Endothelial cell of umbilical vein (primary cell): ENCODE measurements at regions of chr14 and their contacts with region 1.

Region 1: DNA sequence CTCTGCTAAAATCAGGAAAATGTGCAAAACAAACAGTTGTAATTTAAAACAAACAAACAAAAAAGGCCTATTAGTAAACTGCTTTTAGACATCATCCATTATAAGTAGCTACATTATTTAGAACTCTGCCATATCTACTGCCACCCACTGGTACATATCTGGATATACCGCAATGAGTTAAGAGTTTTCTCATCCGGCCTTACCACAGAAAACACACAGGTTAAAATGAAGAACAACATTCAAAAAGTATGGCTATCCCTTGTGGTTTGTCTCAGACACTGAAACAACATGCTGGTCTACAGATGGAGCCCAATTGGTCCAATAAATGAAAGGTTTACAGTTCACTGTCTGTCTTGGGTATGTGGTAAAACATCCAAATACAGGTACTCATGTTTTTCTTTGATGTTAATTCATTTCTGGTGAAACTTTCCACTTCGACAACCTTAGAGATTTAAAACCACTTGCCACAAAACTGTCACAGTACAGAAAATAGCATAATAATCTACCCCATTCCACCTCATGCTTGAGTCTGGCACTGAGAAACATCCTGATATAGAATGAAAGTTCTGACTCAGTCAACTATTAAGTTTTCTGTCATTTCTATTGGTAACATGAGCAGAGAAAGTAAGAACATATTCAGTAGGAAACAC is 354.3 kb downstream of the CEP128 start:
- DNase-seq: peak; percentile 48
- H3K4me3 ChIP-seq: no peak overlapping the region
- H3K27ac ChIP-seq: no peak overlapping the region
- H3K4me1 ChIP-seq: peaks cover 7% of the 10 kb centered on the region
- H3K27me3 ChIP-seq: no peaks in the 10 kb centered on the region
- CTCF ChIP-seq: peak; percentile 40 to 47
- POLR2A ChIP-seq: no peak

Region 2: GRCh38 chr14:79011091-79011919 is 1575.9 kb before region 1 on chr14:
- CTCF ChIA-PET with region 1: no interaction called
- POLR2A ChIA-PET with region 1: no interaction called
- dilution Hi-C with region 1: no loop called
- intact Hi-C with region 1: loop called (anchors 1 kb)
- DNase-seq: peak; percentile 76
- H3K4me3 ChIP-seq: no peak overlapping the region
- H3K27ac ChIP-seq: peak overlapping the region; percentile 63
- H3K4me1 ChIP-seq: peaks cover 11% of the 10 kb centered on the region
- H3K27me3 ChIP-seq: no peaks in the 10 kb centered on the region
- CTCF ChIP-seq: peak in 1 of 2 donors; percentile 42
- POLR2A ChIP-seq: no peak

Region 3: GRCh38 chr14:80483331-80483730 is 103.9 kb before region 1 on chr14:
- CTCF ChIA-PET with region 1: no interaction called
- POLR2A ChIA-PET with region 1: no interaction called
- dilution Hi-C with region 1: no loop called
- intact Hi-C with region 1: no loop called
- DNase-seq: no peak
- H3K4me3 ChIP-seq: no peak overlapping the region
- H3K27ac ChIP-seq: no peak overlapping the region
- H3K4me1 ChIP-seq: no peaks in the 10 kb centered on the region
- H3K27me3 ChIP-seq: no peaks in the 10 kb centered on the region
- CTCF ChIP-seq: no peak
- POLR2A ChIP-seq: no peak

Region 4: GRCh38 chr14:80549141-80549540 is 38.1 kb before region 1 on chr14:
- CTCF ChIA-PET with region 1: interaction called, 14 read pairs
- POLR2A ChIA-PET with region 1: no interaction called
- dilution Hi-C with region 1: no loop called
- intact Hi-C with region 1: no loop called
- DNase-seq: no peak
- H3K4me3 ChIP-seq: no peak overlapping the region
- H3K27ac ChIP-seq: no peak overlapping the region
- H3K4me1 ChIP-seq: peaks cover 8% of the 10 kb centered on the region
- H3K27me3 ChIP-seq: no peaks in the 10 kb centered on the region
- CTCF ChIP-seq: no peak
- POLR2A ChIP-seq: no peak

Region 5: GRCh38 chr14:80615831-80616230 is 28.6 kb after region 1 on chr14:
- CTCF ChIA-PET with region 1: interaction called, 16 read pairs
- POLR2A ChIA-PET with region 1: no interaction called
- dilution Hi-C with region 1: no loop called
- intact Hi-C with region 1: no loop called
- DNase-seq: no peak
- H3K4me3 ChIP-seq: no peak overlapping the region
- H3K27ac ChIP-seq: no peak overlapping the region
- H3K4me1 ChIP-seq: no peaks in the 10 kb centered on the region
- H3K27me3 ChIP-seq: no peaks in the 10 kb centered on the region
- CTCF ChIP-seq: no peak
- POLR2A ChIP-seq: no peak

Region 6: GRCh38 chr14:80678436-80678835 is 91.2 kb after region 1 on chr14:
- CTCF ChIA-PET with region 1: no interaction called
- POLR2A ChIA-PET with region 1: no interaction called
- dilution Hi-C with region 1: no loop called
- intact Hi-C with region 1: no loop called
- DNase-seq: no peak
- H3K4me3 ChIP-seq: no peak overlapping the region
- H3K27ac ChIP-seq: no peak overlapping the region
- H3K4me1 ChIP-seq: no peaks in the 10 kb centered on the region
- H3K27me3 ChIP-seq: no peaks in the 10 kb centered on the region
- CTCF ChIP-seq: no peak
- POLR2A ChIP-seq: no peak

Region 7: DNA sequence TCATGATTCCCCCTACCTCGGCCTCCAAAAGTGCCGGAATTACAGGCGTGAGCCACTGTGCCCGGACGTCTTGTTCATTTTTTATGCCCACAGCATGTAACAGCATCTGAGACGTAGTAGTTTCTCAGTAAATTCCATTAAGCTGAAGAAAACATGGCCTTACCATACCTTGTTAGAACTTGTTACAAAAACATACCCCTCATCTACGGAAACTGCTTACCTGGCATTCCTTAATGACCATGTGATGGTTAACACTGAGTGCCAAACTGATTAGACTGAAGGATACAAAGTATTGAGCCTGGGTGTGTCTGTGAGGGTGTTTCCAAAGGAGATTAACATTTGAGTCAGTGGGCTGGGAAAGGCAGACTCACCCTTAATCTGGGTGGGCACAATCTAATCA is 167.5 kb after region 1 on chr14:
- CTCF ChIA-PET with region 1: no interaction called
- POLR2A ChIA-PET with region 1: no interaction called
- dilution Hi-C with region 1: no loop called
- intact Hi-C with region 1: no loop called
- DNase-seq: no peak
- H3K4me3 ChIP-seq: no peak overlapping the region
- H3K27ac ChIP-seq: no peak overlapping the region
- H3K4me1 ChIP-seq: no peaks in the 10 kb centered on the region
- H3K27me3 ChIP-seq: no peaks in the 10 kb centered on the region
- CTCF ChIP-seq: no peak
- POLR2A ChIP-seq: no peak